ENCODE measurements at regions of chr3 and their contacts with region 1.

Region 1: DNA sequence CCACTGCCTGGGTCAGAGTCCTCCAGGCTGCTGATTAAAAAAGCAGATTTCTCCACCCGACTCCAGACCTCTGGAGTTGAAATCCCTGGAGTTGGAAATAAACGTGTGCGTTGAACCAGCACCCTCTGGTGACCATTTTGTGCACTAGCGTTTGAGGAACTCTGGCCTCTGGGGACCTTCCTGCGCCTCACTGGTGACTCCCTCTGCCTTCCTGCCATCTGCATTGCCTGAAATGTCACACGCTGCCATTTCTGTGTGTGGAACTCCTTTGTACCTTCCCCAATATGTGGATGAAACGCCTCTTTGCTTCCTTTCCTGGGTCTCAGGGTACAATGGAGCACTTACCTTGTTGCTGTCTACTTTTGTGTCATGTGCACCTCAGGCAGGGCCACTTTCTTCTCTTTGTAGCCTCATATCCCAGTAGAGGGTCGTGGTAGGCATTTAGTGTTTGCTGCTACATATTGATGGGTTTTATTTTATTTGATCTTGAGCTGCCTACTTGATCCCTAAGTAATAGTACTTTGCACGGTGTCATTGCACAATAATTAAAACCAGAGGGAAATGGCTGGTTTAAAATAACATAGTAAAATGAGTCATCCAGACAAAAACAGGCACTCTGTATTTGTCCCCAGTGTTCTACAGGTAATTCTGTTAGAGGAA is 56.8 kb downstream of the GPR171 start:
- DNase-seq: peak; percentile 25 to 63 (median 36)
- ATAC-seq: peak; percentile 92
- H3K4me3 ChIP-seq: no peak overlapping the region
- H3K4me3 Mint-ChIP-seq: no peak overlapping the region
- H3K27ac ChIP-seq: no peak overlapping the region
- H3K27ac Mint-ChIP-seq: no peak overlapping the region
- H3K4me1 ChIP-seq: peaks cover 0 to 3% of the 10 kb centered on the region in 2 donors
- H3K4me1 Mint-ChIP-seq: peaks cover 0 to 4% (median 0%) of the 10 kb centered on the region in 7 donors
- H3K27me3 ChIP-seq: no peaks in the 10 kb centered on the region
- H3K27me3 Mint-ChIP-seq: peaks cover 0 to 29% (median 11%) of the 10 kb centered on the region in 5 donors

Region 2: GRCh38 chr3:150721285-150722130 is 424.7 kb before region 1 on chr3:
- CTCF ChIA-PET with region 1: interaction called, 4 read pairs
- POLR2A ChIA-PET with region 1: no interaction called
- intact Hi-C with region 1: loop called (anchors 1 kb)
- DNase-seq: peak in 7 of 9 donors; percentile 33 to 77 (median 70)
- ATAC-seq: peak; percentile 94
- H3K4me3 ChIP-seq: no peak overlapping the region
- H3K4me3 Mint-ChIP-seq: peak overlapping the region in 1 of 10 donors; percentile 3
- H3K27ac ChIP-seq: no peak overlapping the region
- H3K27ac Mint-ChIP-seq: no peak overlapping the region
- H3K4me1 ChIP-seq: no peaks in the 10 kb centered on the region
- H3K4me1 Mint-ChIP-seq: peaks cover 0 to 19% (median 9%) of the 10 kb centered on the region in 7 donors
- H3K27me3 ChIP-seq: no peaks in the 10 kb centered on the region
- H3K27me3 Mint-ChIP-seq: no peaks in the 10 kb centered on the region

Region 3: DNA sequence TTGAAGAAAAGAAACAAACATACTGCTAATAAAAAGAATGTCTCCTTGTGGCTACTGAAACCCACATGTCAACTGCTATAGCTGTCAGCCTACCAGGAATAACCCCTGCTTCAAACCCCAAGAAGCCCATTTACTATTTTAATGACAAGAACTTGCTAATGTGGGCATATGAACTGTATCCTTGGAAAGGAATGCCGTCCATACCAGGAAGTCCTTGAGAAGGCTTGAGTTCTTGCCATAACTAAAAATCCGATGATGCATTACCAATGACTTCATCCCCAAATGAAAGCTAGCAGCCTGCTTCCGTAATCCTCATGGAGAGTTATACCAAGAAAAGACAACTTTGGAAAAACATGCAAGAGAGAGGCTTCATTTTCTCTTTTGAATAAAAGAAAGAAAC is 275.8 kb before region 1 on chr3:
- CTCF ChIA-PET with region 1: no interaction called
- POLR2A ChIA-PET with region 1: no interaction called
- intact Hi-C with region 1: loop called in 1 of 2 experiments (anchors 1 kb)
- DNase-seq: no peak
- ATAC-seq: no peak
- H3K4me3 ChIP-seq: no peak overlapping the region
- H3K4me3 Mint-ChIP-seq: no peak overlapping the region
- H3K27ac ChIP-seq: no peak overlapping the region
- H3K27ac Mint-ChIP-seq: no peak overlapping the region
- H3K4me1 ChIP-seq: no peaks in the 10 kb centered on the region
- H3K4me1 Mint-ChIP-seq: peaks cover 0 to 3% (median 0%) of the 10 kb centered on the region in 7 donors
- H3K27me3 ChIP-seq: no peaks in the 10 kb centered on the region
- H3K27me3 Mint-ChIP-seq: peaks cover 4 to 17% (median 12%) of the 10 kb centered on the region in 5 donors

Region 4: DNA sequence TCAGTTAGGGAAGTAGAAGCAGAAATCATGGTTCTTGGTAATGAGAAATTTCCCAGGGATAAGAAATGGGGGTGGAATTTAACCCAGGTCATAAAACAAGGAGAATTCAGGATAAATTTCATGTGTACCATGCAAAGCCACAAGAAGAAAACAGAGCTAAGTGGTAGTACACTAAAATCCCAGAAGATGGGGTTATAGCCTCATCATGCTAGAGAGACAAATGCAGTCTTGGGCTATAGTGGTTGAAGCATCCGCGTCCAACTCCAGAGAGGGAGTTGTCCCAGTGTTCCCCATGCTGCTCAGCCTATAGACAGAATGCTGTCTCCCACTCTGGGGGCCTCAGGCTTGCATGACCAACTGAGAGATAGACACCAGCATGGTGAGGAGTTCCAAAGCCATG is 137.5 kb before region 1 on chr3:
- CTCF ChIA-PET with region 1: interaction called, 3 read pairs
- POLR2A ChIA-PET with region 1: no interaction called
- intact Hi-C with region 1: loop called in 1 of 2 experiments (anchors 1 kb)
- DNase-seq: no peak
- ATAC-seq: no peak
- H3K4me3 ChIP-seq: no peak overlapping the region
- H3K4me3 Mint-ChIP-seq: no peak overlapping the region
- H3K27ac ChIP-seq: no peak overlapping the region
- H3K27ac Mint-ChIP-seq: no peak overlapping the region
- H3K4me1 ChIP-seq: no peaks in the 10 kb centered on the region
- H3K4me1 Mint-ChIP-seq: no peaks in the 10 kb centered on the region
- H3K27me3 ChIP-seq: peaks cover 0 to 3% of the 10 kb centered on the region in 2 donors
- H3K27me3 Mint-ChIP-seq: peaks cover 0 to 8% (median 4%) of the 10 kb centered on the region in 5 donors

Region 5: GRCh38 chr3:151086484-151087456 is 59.4 kb before region 1 on chr3:
- CTCF ChIA-PET with region 1: no interaction called
- POLR2A ChIA-PET with region 1: no interaction called
- intact Hi-C with region 1: loop called (anchors 1 to 5 kb)
- DNase-seq: peak; percentile 32 to 72 (median 50)
- ATAC-seq: peak; percentile 88
- H3K4me3 ChIP-seq: peak overlapping the region; percentile 58
- H3K4me3 Mint-ChIP-seq: peak overlapping the region; percentile 85 to 94 (median 90)
- H3K27ac ChIP-seq: no peak overlapping the region
- H3K27ac Mint-ChIP-seq: peak overlapping the region in 4 of 9 donors; percentile 20 to 73 (median 57)
- H3K4me1 ChIP-seq: peaks cover 0 to 6% of the 10 kb centered on the region in 2 donors
- H3K4me1 Mint-ChIP-seq: peaks cover 0 to 21% (median 11%) of the 10 kb centered on the region in 7 donors
- H3K27me3 ChIP-seq: peaks cover 0 to 10% of the 10 kb centered on the region in 2 donors
- H3K27me3 Mint-ChIP-seq: peaks cover 31 to 65% (median 58%) of the 10 kb centered on the region in 5 donors

Region 6: DNA sequence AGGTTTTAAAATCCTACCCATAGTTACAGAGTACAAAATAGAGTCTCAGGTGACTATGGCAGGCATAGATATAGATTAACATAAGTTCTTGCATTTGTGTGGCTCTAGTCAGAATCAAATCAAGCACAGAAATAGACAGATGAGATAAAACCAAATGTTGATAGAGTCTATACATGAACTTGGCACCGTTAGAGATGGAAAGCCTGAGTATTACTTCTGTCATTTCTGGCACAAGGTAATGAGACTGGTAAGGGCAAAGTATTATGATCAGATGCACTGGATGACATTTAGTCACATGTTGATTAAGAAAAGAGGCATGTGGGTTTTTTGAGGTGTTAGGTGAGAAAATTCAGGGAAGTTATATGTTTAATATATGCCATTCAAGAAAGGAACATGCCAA is 1342.2 kb after region 1 on chr3:
- CTCF ChIA-PET with region 1: no interaction called
- POLR2A ChIA-PET with region 1: no interaction called
- intact Hi-C with region 1: no loop called
- DNase-seq: no peak
- ATAC-seq: no peak
- H3K4me3 ChIP-seq: no peak overlapping the region
- H3K4me3 Mint-ChIP-seq: no peak overlapping the region
- H3K27ac ChIP-seq: no peak overlapping the region
- H3K27ac Mint-ChIP-seq: no peak overlapping the region
- H3K4me1 ChIP-seq: no peaks in the 10 kb centered on the region
- H3K4me1 Mint-ChIP-seq: no peaks in the 10 kb centered on the region
- H3K27me3 ChIP-seq: no peaks in the 10 kb centered on the region
- H3K27me3 Mint-ChIP-seq: peaks cover 0 to 10% (median 7%) of the 10 kb centered on the region in 5 donors

Measured in naive thymus-derived CD4-positive, alpha-beta T cell (primary cell).